AG04450 (cell line): ENCODE measurements at regions of chr3 and their contacts with region 1.

Region 1: GRCh38 chr3:157447026-157447694 is 10.5 kb downstream of the PTX3 start:
- DNase-seq: no peak
- H3K4me3 ChIP-seq: no peak overlapping the region
- H3K27ac ChIP-seq: no peak overlapping the region
- H3K27me3 ChIP-seq: no peaks in the 10 kb centered on the region
- CTCF ChIP-seq: peak; percentile 83

Region 2: DNA sequence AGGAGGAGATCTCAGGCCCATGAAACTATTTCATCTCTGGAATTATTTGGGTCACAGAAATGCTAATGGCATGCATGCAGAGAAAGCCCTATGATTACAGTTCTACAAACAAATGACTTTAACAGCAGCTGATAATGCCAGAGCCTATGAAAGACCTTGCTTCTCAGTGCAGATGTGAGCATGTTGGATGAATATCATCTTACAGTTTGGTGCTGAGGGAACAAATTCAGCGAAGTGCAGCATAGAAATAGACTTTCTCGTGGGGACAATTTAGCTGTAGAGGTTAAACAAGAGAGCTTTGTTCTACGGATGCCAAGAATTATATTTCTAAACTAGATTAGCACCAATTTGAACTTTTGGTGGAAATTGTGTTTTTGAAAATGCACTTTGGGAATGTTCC is 17.2 kb after region 1 on chr3:
- CTCF ChIA-PET with region 1: interaction called, 10 read pairs
- POLR2A ChIA-PET with region 1: no interaction called
- DNase-seq: peak; percentile 52
- H3K4me3 ChIP-seq: no peak overlapping the region
- H3K27ac ChIP-seq: peak overlapping the region; percentile 47
- H3K27me3 ChIP-seq: no peaks in the 10 kb centered on the region
- CTCF ChIP-seq: no peak